T-cell (primary cell): ENCODE measurements at regions of chr13 and their contacts with region 1.

Region 1: DNA sequence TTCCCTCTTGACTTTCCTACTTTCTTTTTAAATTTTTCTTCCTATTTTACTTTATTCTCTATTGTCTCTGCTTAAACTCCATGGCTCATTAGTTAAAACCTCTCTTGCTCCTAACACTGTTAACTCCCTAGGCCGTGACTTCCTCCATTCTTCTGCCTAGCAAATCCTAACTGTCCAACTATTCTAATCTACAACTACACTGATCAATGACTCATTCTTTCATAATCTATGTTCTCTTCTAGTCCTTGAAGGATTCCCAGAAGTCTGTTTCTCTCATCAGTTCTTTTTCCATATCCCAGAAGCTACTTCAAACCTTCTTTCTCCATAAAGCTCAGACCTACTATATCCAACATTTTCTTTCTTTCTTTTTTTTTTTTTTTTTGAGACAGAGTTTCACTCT is 66.9 kb downstream of the MICU2 start:
- DNase-seq: no peak
- ATAC-seq: no peak
- H3K4me3 ChIP-seq: no peak overlapping the region
- H3K4me3 Mint-ChIP-seq: no peak overlapping the region
- H3K27ac ChIP-seq: no peak overlapping the region
- H3K27ac Mint-ChIP-seq: no peak overlapping the region
- H3K4me1 ChIP-seq: no peaks in the 10 kb centered on the region
- H3K4me1 Mint-ChIP-seq: peaks cover 10 to 17% (median 16%) of the 10 kb centered on the region in 3 donors
- H3K27me3 ChIP-seq: no peaks in the 10 kb centered on the region
- H3K27me3 Mint-ChIP-seq: no peaks in the 10 kb centered on the region

Region 2: GRCh38 chr13:21752501-21752900 is 215.4 kb after region 1 on chr13:
- CTCF ChIA-PET with region 1: interaction called in 1 of 2 experiments, 18 read pairs
- POLR2A ChIA-PET with region 1: no interaction called
- DNase-seq: no peak
- ATAC-seq: no peak
- H3K4me3 ChIP-seq: no peak overlapping the region
- H3K4me3 Mint-ChIP-seq: no peak overlapping the region
- H3K27ac ChIP-seq: no peak overlapping the region
- H3K27ac Mint-ChIP-seq: no peak overlapping the region
- H3K4me1 ChIP-seq: no peaks in the 10 kb centered on the region
- H3K4me1 Mint-ChIP-seq: no peaks in the 10 kb centered on the region
- H3K27me3 ChIP-seq: peaks cover 0 to 2% of the 10 kb centered on the region in 2 experiments
- H3K27me3 Mint-ChIP-seq: peaks cover 10% of the 10 kb centered on the region in 2 donors

Region 3: GRCh38 chr13:23098161-23098907 is 1561.2 kb after region 1 on chr13:
- CTCF ChIA-PET with region 1: no interaction called
- POLR2A ChIA-PET with region 1: no interaction called
- DNase-seq: no peak
- ATAC-seq: no peak
- H3K4me3 ChIP-seq: no peak overlapping the region
- H3K4me3 Mint-ChIP-seq: no peak overlapping the region
- H3K27ac ChIP-seq: no peak overlapping the region
- H3K27ac Mint-ChIP-seq: no peak overlapping the region
- H3K4me1 ChIP-seq: no peaks in the 10 kb centered on the region
- H3K4me1 Mint-ChIP-seq: no peaks in the 10 kb centered on the region
- H3K27me3 ChIP-seq: peaks cover 0 to 3% of the 10 kb centered on the region in 2 experiments
- H3K27me3 Mint-ChIP-seq: peaks cover 3 to 7% of the 10 kb centered on the region in 2 donors